CD8-positive, alpha-beta T cell (primary cell): ENCODE measurements at regions of chr5 and their contacts with region 1.

Region 1: GRCh38 chr5:159106569-159107282 is 7.0 kb upstream of the EBF1 start:
- DNase-seq: peak; percentile 42 to 84 (median 69)
- ATAC-seq: peak; percentile 81
- H3K4me3 ChIP-seq: peak overlapping the region; percentile 22 to 44
- H3K4me3 Mint-ChIP-seq: peak overlapping the region; percentile 74
- H3K27ac ChIP-seq: no peak overlapping the region
- H3K27ac Mint-ChIP-seq: no peak overlapping the region
- H3K4me1 ChIP-seq: peaks cover 14% of the 10 kb centered on the region
- H3K4me1 Mint-ChIP-seq: peaks cover 26% of the 10 kb centered on the region
- H3K27me3 ChIP-seq: peaks cover 9 to 29% of the 10 kb centered on the region in 2 experiments
- H3K27me3 Mint-ChIP-seq: peaks cover 51% of the 10 kb centered on the region
- CTCF ChIP-seq: peak; percentile 93

Region 2: DNA sequence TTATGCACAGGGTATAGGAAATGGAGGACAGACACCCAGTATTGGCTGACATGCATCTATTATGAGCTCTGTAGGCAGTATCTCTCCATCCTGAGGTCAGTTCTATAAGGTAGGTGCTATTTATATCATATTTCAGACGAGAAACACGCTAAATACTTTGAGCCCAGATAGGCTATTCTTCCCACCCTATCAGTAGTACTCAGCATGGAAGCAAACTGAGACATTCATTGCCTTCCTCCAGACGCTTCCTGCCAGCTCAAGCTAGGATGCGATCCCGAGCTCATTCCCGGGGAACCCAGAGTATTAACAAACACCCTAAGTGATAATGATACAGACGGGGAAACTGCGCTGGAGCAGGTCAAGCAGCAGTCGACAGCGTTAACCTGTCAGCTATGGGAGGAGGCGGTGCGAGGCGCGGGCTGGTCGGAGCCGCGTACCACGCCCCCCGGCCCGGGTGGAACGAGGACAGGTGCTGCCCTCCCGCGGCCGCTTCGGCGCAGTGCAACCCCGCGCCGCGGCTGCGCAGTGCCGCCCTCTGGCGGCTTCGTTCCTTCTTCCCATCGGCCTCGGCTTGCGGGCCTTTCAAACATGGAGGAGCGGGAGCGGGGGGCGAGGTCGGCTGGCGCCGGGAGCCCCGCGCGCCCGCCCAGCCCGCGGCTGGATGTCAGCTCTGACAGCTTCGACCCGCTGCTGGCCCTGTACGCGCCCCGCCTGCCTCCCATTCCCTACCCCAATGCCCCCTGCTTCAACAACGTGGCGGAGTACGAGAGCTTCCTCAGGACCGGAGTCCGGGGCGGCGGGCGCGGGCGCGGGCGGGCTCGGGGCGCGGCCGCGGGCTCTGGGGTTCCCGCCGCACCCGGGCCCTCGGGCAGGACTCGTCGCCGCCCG is 1363.3 kb before region 1 on chr5 and contains the start of gene LSM11:
- CTCF ChIA-PET with region 1: no interaction called
- POLR2A ChIA-PET with region 1: no interaction called
- intact Hi-C with region 1: loop called in 1 of 2 experiments (anchors 10 kb)
- DNase-seq: peak; percentile 84 to 97 (median 91)
- ATAC-seq: peak; percentile 98
- H3K4me3 ChIP-seq: peak within 1 kb of the TSS; percentile 53 to 70
- H3K4me3 Mint-ChIP-seq: peak within 1 kb of the TSS; percentile 92
- H3K27ac ChIP-seq: no peak within 1 kb of the TSS
- H3K27ac Mint-ChIP-seq: peak within 1 kb of the TSS; percentile 86
- H3K4me1 ChIP-seq: peaks cover 13% of the 10 kb centered on the region
- H3K4me1 Mint-ChIP-seq: peaks cover 26% of the 10 kb centered on the region
- H3K27me3 ChIP-seq: no peaks in the 10 kb centered on the region
- H3K27me3 Mint-ChIP-seq: no peaks in the 10 kb centered on the region
- CTCF ChIP-seq: peak; percentile 99
- total RNA-seq, gene LSM11: 0.44 to 0.65 TPM

Region 3: GRCh38 chr5:158074992-158075769 is 1031.5 kb before region 1 on chr5:
- CTCF ChIA-PET with region 1: interaction called, 22 read pairs
- POLR2A ChIA-PET with region 1: no interaction called
- intact Hi-C with region 1: loop called in 1 of 2 experiments (anchors 1 kb)
- DNase-seq: peak; percentile 7 to 66 (median 39)
- ATAC-seq: peak; percentile 64
- H3K4me3 ChIP-seq: no peak overlapping the region
- H3K4me3 Mint-ChIP-seq: no peak overlapping the region
- H3K27ac ChIP-seq: no peak overlapping the region
- H3K27ac Mint-ChIP-seq: no peak overlapping the region
- H3K4me1 ChIP-seq: no peaks in the 10 kb centered on the region
- H3K4me1 Mint-ChIP-seq: peaks cover 3% of the 10 kb centered on the region
- H3K27me3 ChIP-seq: no peaks in the 10 kb centered on the region
- H3K27me3 Mint-ChIP-seq: peaks cover 7% of the 10 kb centered on the region
- CTCF ChIP-seq: peak; percentile 54

Region 4: DNA sequence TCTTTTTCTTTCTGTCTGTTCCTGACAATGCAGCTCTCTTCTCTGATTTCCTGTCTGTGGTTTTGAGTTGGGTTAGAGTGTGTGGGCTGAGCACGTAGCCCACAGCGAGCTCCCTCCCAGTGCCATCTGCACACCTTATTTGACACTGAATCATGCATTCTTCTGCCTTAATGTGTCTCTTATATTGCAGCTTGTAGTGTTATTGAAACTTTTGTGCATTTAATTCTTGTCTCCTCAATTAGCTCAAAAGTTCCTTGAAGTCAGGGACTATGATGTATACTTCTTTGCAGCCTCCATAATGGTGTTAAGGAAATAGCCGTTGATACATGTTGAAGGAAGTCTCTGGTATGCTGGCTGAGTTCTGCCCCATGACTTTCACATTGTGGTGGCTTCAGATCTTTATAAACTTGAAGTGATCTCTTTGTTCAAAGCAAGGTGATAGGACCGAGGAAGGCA is 671.5 kb before region 1 on chr5:
- CTCF ChIA-PET with region 1: no interaction called
- POLR2A ChIA-PET with region 1: no interaction called
- intact Hi-C with region 1: loop called in 1 of 2 experiments (anchors 10 kb)
- DNase-seq: peak in 3 of 9 experiments; percentile 7 to 57 (median 30)
- ATAC-seq: peak; percentile 82
- H3K4me3 ChIP-seq: no peak overlapping the region
- H3K4me3 Mint-ChIP-seq: peak overlapping the region; percentile 61
- H3K27ac ChIP-seq: no peak overlapping the region
- H3K27ac Mint-ChIP-seq: peak overlapping the region; percentile 86
- H3K4me1 ChIP-seq: peaks cover 44% of the 10 kb centered on the region
- H3K4me1 Mint-ChIP-seq: peaks cover 65% of the 10 kb centered on the region
- H3K27me3 ChIP-seq: no peaks in the 10 kb centered on the region
- H3K27me3 Mint-ChIP-seq: no peaks in the 10 kb centered on the region
- CTCF ChIP-seq: no peak

Region 5: GRCh38 chr5:158701406-158702177 is 405.1 kb before region 1 on chr5:
- CTCF ChIA-PET with region 1: interaction called, 305 read pairs
- POLR2A ChIA-PET with region 1: no interaction called
- intact Hi-C with region 1: no loop called
- DNase-seq: no peak
- ATAC-seq: no peak
- H3K4me3 ChIP-seq: no peak overlapping the region
- H3K4me3 Mint-ChIP-seq: no peak overlapping the region
- H3K27ac ChIP-seq: no peak overlapping the region
- H3K27ac Mint-ChIP-seq: no peak overlapping the region
- H3K4me1 ChIP-seq: no peaks in the 10 kb centered on the region
- H3K4me1 Mint-ChIP-seq: no peaks in the 10 kb centered on the region
- H3K27me3 ChIP-seq: no peaks in the 10 kb centered on the region
- H3K27me3 Mint-ChIP-seq: no peaks in the 10 kb centered on the region
- CTCF ChIP-seq: no peak

Region 6: GRCh38 chr5:159120446-159120845 is 13.7 kb after region 1 on chr5:
- CTCF ChIA-PET with region 1: interaction called, 22 read pairs
- POLR2A ChIA-PET with region 1: no interaction called
- intact Hi-C with region 1: no loop called
- DNase-seq: peak in 2 of 9 experiments; percentile 47 to 72
- ATAC-seq: peak; percentile 94
- H3K4me3 ChIP-seq: peak overlapping the region; percentile 31 to 37
- H3K4me3 Mint-ChIP-seq: peak overlapping the region; percentile 78
- H3K27ac ChIP-seq: peak overlapping the region; percentile 29 to 79
- H3K27ac Mint-ChIP-seq: peak overlapping the region; percentile 95
- H3K4me1 ChIP-seq: peaks cover 15% of the 10 kb centered on the region
- H3K4me1 Mint-ChIP-seq: peaks cover 22% of the 10 kb centered on the region
- H3K27me3 ChIP-seq: no peaks in the 10 kb centered on the region
- H3K27me3 Mint-ChIP-seq: no peaks in the 10 kb centered on the region
- CTCF ChIP-seq: no peak

Region 7: DNA sequence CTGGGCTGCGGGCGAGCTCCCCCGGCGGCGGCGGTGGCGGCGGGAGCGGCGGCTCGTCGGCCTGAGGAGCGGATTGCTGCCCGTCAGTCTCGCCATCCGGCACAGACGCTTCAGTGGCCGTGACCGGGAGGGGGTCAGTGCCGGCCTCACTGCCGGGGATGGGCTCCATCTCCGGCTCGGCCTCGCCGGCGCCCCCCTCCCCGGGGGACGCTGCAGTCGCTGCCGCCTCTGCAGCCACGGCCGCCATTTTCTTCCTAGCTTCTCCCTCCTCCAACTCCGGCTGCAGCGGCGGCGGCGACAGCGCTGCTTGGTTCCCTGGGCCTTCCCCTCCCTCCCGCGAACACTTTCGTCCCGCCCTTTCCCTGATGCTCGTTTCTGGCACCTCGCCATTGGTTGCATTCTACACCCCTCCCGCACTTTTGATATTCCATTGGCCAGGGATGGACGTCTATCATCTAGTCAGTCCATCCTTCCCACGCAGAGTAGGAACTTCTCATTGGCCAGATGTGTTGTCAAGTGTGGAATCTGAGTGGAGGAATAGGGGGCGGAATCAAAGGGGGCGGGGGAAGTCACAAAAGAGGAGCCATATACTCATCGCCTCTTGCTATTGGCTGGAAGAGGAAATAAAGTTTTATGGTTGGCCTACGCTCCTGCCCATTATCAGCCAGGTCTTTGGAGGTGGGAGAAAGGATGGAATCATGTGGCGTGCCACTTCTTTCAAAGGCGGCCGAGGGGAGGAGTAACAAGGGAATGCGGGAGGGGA is 1012.6 kb after region 1 on chr5 and contains the start of gene PWWP2A:
- CTCF ChIA-PET with region 1: no interaction called
- POLR2A ChIA-PET with region 1: no interaction called
- intact Hi-C with region 1: loop called in 1 of 2 experiments (anchors 10 kb)
- DNase-seq: peak; percentile 94 to 100 (median 97)
- ATAC-seq: peak; percentile 92
- H3K4me3 ChIP-seq: peak within 1 kb of the TSS; percentile 69 to 90
- H3K4me3 Mint-ChIP-seq: peak within 1 kb of the TSS; percentile 90
- H3K27ac ChIP-seq: peak within 1 kb of the TSS; percentile 70 to 78
- H3K27ac Mint-ChIP-seq: peak within 1 kb of the TSS; percentile 90
- H3K4me1 ChIP-seq: peaks cover 7% of the 10 kb centered on the region
- H3K4me1 Mint-ChIP-seq: peaks cover 18% of the 10 kb centered on the region
- H3K27me3 ChIP-seq: no peaks in the 10 kb centered on the region
- H3K27me3 Mint-ChIP-seq: no peaks in the 10 kb centered on the region
- CTCF ChIP-seq: no peak
- total RNA-seq, gene PWWP2A: 18.1 to 18.4 TPM